Esophagus squamous epithelium (tissue), 5 donors: ENCODE measurements at regions of chr12 and their contacts with region 1.

Region 1: DNA sequence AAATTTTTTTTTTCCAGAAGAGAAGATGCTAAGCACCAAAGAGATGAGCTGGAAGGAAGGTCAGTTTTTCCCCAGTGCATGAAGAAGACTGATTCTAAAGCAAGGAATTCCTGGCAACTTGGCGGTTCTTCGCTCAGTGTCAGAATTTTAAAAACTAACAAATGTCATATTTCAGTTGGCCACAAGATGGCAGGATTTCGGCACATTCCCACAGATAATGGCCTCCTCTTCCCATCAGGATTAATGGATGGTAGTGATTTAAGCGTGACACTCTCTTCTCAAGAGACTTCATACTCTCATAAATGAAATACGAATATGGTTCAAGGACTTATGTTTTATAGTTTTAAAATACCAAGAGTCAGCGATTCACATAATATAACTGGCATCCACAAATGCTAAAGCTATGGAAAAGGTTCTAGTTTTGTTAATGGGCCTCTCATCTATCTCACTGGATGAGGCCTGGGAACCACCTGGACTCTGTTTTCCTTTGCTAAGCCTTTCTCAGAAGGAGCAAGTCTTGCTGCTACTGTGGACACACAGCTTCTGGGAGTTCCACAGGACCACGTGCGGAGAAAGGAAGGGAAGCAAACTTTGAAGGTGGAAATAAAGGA is 46.1 kb upstream of the PTPRO start:
- DNase-seq: no peak
- H3K4me3 ChIP-seq: no peak overlapping the region
- H3K27ac ChIP-seq: no peak overlapping the region
- H3K4me1 ChIP-seq: peaks cover 3 to 55% (median 18%) of the 10 kb centered on the region in 3 donors
- H3K27me3 ChIP-seq: no peaks in the 10 kb centered on the region
- CTCF ChIP-seq: peak; percentile 46 to 79 (median 69)
- POLR2A ChIP-seq: no peak

Region 2: DNA sequence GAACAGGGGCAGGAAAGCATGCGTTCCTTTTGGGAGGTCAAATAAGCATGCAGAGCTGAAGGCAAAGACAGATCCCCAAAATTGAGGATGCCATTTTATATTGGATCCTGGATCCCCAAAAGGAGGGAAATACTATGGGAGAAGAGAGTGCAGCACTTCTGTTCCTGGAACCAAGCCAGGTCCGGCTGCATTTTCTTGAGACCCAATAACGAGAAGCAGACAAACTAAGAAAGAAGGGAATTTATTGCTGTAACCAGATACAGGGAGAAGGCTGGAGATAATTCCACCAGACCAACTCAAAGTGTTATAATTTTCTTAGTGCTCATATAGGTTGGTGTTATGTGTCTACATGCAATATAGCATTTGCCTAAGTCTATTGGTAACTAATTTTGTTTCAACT is 242.6 kb before region 1 on chr12:
- intact Hi-C with region 1: no loop called
- DNase-seq: no peak
- H3K4me3 ChIP-seq: no peak overlapping the region
- H3K27ac ChIP-seq: no peak overlapping the region
- H3K4me1 ChIP-seq: no peaks in the 10 kb centered on the region
- H3K27me3 ChIP-seq: no peaks in the 10 kb centered on the region
- CTCF ChIP-seq: no peak
- POLR2A ChIP-seq: no peak

Region 3: DNA sequence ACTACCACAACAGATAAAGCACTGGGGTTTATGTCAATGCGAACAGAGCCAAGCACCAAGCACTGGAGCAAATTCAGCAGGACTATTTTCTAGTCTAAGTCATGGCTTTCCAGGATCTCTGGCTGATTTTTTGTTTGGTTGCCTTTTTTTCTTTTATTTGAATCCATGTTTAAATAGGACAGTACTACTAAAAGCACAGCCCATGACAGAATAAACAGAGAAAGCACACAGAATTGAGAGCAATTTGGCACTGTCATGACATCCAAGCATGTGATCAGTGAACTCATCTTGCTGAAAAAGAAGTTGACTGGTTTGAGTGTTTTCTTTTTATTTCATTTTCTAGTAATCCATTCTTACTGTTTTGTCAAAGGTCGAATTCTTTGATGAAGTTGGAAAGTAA is 31.9 kb before region 1 on chr12:
- intact Hi-C with region 1: no loop called
- DNase-seq: no peak
- H3K4me3 ChIP-seq: no peak overlapping the region
- H3K27ac ChIP-seq: no peak overlapping the region
- H3K4me1 ChIP-seq: no peaks in the 10 kb centered on the region
- H3K27me3 ChIP-seq: peaks cover 0 to 39% (median 0%) of the 10 kb centered on the region in 4 donors
- CTCF ChIP-seq: no peak
- POLR2A ChIP-seq: no peak

Region 4: DNA sequence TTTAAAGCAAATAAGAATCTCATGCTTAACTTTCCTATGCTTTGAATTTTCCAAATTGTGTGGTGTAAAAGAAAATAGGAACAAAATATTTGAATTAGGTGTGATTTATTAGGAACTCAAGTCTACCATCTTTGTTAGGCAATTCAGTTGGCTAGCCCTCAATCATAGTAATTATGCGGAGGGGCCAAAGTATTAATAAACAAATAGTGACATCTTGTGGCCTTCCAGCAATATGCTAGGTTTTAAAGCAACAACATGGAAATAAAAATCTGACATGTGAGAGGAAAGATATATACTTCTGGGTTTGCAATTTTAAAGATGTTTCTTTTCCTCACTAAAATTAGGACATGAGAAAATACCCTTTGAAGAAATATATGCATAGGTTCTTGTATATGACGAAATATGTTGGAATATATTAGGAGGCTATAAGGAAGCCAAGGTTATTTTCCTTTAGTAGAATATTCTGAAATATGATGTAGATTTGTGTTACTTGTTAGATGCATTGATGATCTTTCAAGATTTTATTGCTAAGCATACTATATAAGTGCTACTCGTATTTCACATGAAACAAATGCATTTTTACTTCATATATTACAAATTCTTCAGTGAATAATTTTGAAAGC is 246.5 kb after region 1 on chr12:
- intact Hi-C with region 1: loop called (anchors 5 kb)
- DNase-seq: no peak
- H3K4me3 ChIP-seq: no peak overlapping the region
- H3K27ac ChIP-seq: no peak overlapping the region
- H3K4me1 ChIP-seq: no peaks in the 10 kb centered on the region
- H3K27me3 ChIP-seq: peaks cover 0 to 14% (median 0%) of the 10 kb centered on the region in 4 donors
- CTCF ChIP-seq: peak; percentile 16 to 72 (median 44)
- POLR2A ChIP-seq: no peak

Region 5: GRCh38 chr12:15856097-15856982 is 580.1 kb after region 1 on chr12:
- intact Hi-C with region 1: loop called (anchors 10 kb)
- DNase-seq: no peak
- H3K4me3 ChIP-seq: no peak overlapping the region
- H3K27ac ChIP-seq: peak overlapping the region in 2 of 4 donors; percentile 23 to 42
- H3K4me1 ChIP-seq: peaks cover 0 to 8% (median 2%) of the 10 kb centered on the region in 3 donors
- H3K27me3 ChIP-seq: no peaks in the 10 kb centered on the region
- CTCF ChIP-seq: peak; percentile 31 to 90 (median 82)
- POLR2A ChIP-seq: no peak